Activated CD4-positive, alpha-beta T cell treated with anti-CD3 and anti-CD28 coated beads for 36 hours (primary cell): ENCODE measurements at regions of chr4 and their contacts with region 1.

Region 1: GRCh38 chr4:152369902-152370295 is 166.0 kb downstream of the FBXW7 start:
- DNase-seq: no peak
- ATAC-seq: no peak
- H3K4me3 Mint-ChIP-seq: no peak overlapping the region
- H3K27ac Mint-ChIP-seq: no peak overlapping the region
- H3K4me1 Mint-ChIP-seq: peaks cover 23% of the 10 kb centered on the region
- H3K27me3 Mint-ChIP-seq: no peaks in the 10 kb centered on the region

Region 2: DNA sequence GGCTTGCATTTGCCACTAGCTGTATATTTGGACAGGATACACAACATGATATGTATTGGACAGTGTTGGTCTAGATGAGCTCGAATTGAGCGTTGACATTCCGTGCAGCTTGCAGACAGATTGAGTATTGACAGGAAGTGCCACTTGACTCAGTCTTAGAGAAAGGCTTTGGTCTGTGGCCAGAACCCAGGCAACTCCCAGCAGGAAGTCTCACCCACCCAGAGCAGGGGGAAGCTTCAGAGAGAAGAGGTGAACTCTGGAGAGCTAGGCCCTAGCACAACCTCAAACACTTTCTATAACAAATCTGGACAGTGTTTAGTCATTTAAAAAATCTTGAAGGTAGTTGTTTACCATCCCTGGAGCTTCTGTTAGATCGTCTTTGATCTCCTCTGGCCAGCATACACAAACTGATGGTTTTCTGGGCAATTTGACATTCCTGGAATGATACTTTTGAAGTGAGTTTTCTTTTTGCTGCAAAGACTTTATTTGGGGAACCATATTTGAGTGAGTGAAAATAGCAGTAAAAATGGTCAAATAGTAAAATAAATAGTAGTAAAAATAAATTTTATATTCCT is 114.4 kb before region 1 on chr4:
- CTCF ChIA-PET with region 1: no interaction called
- POLR2A ChIA-PET with region 1: no interaction called
- intact Hi-C with region 1: loop called in 1 of 2 experiments (anchors 10 kb)
- DNase-seq: peak; percentile 77
- ATAC-seq: peak; percentile 97
- H3K4me3 Mint-ChIP-seq: peak overlapping the region; percentile 2
- H3K27ac Mint-ChIP-seq: no peak overlapping the region
- H3K4me1 Mint-ChIP-seq: peaks cover 14% of the 10 kb centered on the region
- H3K27me3 Mint-ChIP-seq: no peaks in the 10 kb centered on the region